ENCODE measurements at regions of chr2 and their contacts with region 1.

Region 1: DNA sequence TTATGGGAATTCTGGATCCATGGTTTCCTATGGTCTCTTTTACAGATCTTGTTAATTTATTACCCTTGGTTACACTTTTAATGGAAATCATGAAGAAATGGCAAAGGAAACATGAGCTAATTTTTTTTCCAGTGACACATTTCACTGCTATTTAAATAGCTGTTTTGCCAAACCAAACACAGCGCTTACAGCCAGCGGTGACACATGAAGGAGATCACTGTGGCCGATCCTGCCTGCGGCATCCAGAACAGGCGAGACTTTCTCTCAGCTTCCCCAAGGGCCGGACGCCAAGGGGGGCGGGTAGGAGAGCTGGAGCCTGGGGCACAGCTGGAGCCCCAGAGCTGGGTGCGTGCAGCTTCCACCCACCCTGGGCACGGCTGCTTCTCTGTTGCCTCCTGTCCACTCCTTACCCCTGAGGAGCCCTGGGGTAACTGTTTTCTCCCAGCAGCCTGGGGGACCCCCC is 81.4 kb upstream of the PKDCC start:
- DNase-seq: peak; percentile 96
- ATAC-seq: peak; percentile 96
- H3K4me3 ChIP-seq: no peak overlapping the region
- H3K27ac ChIP-seq: no peak overlapping the region
- H3K4me1 ChIP-seq: peaks cover 31% of the 10 kb centered on the region
- H3K27me3 ChIP-seq: no peaks in the 10 kb centered on the region
- CTCF ChIP-seq: no peak

Region 2: DNA sequence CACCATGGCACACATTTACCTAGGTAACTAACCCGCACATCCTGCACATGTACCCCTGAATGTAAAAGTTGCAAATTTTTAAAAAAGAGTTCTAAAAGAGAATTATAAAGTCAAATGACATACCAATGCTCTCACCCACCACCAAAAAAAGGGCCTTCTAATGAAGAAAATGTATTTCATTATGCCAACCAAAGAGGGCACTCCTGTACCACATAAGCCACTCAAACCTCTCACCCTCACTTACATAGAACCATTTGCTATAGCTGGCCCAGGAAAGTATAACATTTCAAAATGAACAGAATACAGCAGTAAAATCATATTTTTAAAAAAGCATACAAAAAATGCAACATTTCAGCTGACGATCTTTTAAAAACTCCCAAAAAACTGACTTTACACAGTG is 160.2 kb before region 1 on chr2:
- CTCF ChIA-PET with region 1: no interaction called
- POLR2A ChIA-PET with region 1: no interaction called
- intact Hi-C with region 1: no loop called
- DNase-seq: no peak
- ATAC-seq: no peak
- H3K4me3 ChIP-seq: no peak overlapping the region
- H3K27ac ChIP-seq: no peak overlapping the region
- H3K4me1 ChIP-seq: no peaks in the 10 kb centered on the region
- H3K27me3 ChIP-seq: peaks cover 22% of the 10 kb centered on the region; the same call in 1 of the 2 replicates
- CTCF ChIP-seq: peak; percentile 51

Region 3: GRCh38 chr2:41859615-41860520 is 106.6 kb before region 1 on chr2:
- CTCF ChIA-PET with region 1: no interaction called
- POLR2A ChIA-PET with region 1: no interaction called
- intact Hi-C with region 1: loop called (anchors 5 kb)
- DNase-seq: peak; percentile 84
- ATAC-seq: peak; percentile 93
- H3K4me3 ChIP-seq: peak overlapping the region; percentile 32; the same call in 1 of the 2 replicates
- H3K27ac ChIP-seq: peak overlapping the region; percentile 87
- H3K4me1 ChIP-seq: peaks cover 27% of the 10 kb centered on the region
- H3K27me3 ChIP-seq: no peaks in the 10 kb centered on the region
- CTCF ChIP-seq: no peak

Region 4: DNA sequence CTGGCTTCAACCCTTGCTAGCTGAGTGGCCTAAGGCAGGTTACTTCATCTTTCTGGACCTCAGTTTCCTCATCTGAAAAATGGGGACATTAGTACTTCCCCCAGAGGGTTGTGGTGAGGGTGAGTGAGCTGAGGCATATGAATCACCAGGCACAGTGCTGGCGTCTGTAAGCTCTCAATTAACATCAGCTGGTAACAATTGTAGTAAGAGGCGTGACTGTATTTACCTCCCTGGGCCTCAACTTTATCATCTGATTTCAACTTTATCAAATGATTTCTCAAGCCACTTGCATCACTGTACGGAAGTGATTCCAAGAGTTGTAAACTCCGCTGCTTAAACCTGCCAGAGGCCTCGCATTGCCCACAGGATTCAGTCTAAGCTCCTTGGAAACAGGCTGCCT is 27.7 kb after region 1 on chr2:
- CTCF ChIA-PET with region 1: no interaction called
- POLR2A ChIA-PET with region 1: no interaction called
- intact Hi-C with region 1: no loop called
- DNase-seq: no peak
- ATAC-seq: no peak
- H3K4me3 ChIP-seq: no peak overlapping the region
- H3K27ac ChIP-seq: no peak overlapping the region
- H3K4me1 ChIP-seq: no peaks in the 10 kb centered on the region
- H3K27me3 ChIP-seq: peaks cover 24% of the 10 kb centered on the region
- CTCF ChIP-seq: no peak

Region 5: GRCh38 chr2:42040643-42041278 is 74.3 kb after region 1 on chr2:
- CTCF ChIA-PET with region 1: no interaction called
- POLR2A ChIA-PET with region 1: no interaction called
- intact Hi-C with region 1: no loop called
- DNase-seq: no peak
- ATAC-seq: no peak
- H3K4me3 ChIP-seq: no peak overlapping the region
- H3K27ac ChIP-seq: no peak overlapping the region
- H3K4me1 ChIP-seq: no peaks in the 10 kb centered on the region
- H3K27me3 ChIP-seq: peaks cover 4% of the 10 kb centered on the region; the same call in 1 of the 2 replicates
- CTCF ChIP-seq: no peak; the same call in 1 of the 2 replicates

Measured in PC-3 (cell line).